Breast epithelium (tissue), 4 donors: ENCODE measurements at regions of chrX and their contacts with region 1.

Region 1: GRCh38 chrX:100615005-100615404 is 21.6 kb downstream of the TSPAN6 start:
- DNase-seq: no peak
- H3K4me3 ChIP-seq: no peak overlapping the region
- H3K27ac ChIP-seq: no peak overlapping the region
- H3K4me1 ChIP-seq: no peaks in the 10 kb centered on the region
- H3K27me3 ChIP-seq: peaks cover 0 to 42% of the 10 kb centered on the region in 2 donors
- CTCF ChIP-seq: peak in 2 of 3 donors; percentile 9 to 33
- POLR2A ChIP-seq: no peak

Region 2: DNA sequence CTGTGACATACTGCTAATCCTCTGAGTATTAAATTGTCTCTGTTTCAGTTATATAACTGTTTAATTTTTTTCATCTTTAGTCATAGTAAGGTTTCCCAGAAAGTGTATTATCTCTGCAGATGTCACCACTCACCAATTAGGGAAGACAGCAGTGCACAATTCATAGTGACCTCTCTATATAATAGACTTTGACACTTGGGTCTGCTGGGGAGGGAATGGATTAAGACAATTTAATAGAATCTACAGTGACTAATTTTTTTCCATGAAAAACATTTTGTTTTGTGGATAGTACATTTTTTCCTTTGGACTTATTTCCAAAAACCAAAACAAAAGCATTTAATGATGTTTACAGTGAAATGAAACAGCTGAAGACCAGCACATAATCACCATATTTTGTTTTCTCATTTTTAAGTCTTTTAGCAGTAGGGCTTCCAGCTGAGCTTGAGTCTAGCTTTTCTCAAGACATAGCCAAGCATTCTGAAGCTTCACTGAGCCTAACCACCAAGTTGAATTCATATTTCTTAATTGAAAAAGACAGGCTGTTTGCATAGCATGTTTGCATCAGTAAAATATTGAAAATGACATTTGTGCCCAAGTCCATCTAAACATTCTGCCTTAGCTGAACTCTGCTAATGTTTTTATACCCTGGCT is 274.4 kb before region 1 on chrX:
- intact Hi-C with region 1: loop called (anchors 10 kb)
- DNase-seq: no peak
- H3K4me3 ChIP-seq: no peak overlapping the region
- H3K27ac ChIP-seq: no peak overlapping the region
- H3K4me1 ChIP-seq: no peaks in the 10 kb centered on the region
- H3K27me3 ChIP-seq: peaks cover 0 to 48% of the 10 kb centered on the region in 2 donors
- CTCF ChIP-seq: no peak
- POLR2A ChIP-seq: no peak